PC-3 (cell line): ENCODE measurements at regions of chr5 and their contacts with region 1.

Region 1: DNA sequence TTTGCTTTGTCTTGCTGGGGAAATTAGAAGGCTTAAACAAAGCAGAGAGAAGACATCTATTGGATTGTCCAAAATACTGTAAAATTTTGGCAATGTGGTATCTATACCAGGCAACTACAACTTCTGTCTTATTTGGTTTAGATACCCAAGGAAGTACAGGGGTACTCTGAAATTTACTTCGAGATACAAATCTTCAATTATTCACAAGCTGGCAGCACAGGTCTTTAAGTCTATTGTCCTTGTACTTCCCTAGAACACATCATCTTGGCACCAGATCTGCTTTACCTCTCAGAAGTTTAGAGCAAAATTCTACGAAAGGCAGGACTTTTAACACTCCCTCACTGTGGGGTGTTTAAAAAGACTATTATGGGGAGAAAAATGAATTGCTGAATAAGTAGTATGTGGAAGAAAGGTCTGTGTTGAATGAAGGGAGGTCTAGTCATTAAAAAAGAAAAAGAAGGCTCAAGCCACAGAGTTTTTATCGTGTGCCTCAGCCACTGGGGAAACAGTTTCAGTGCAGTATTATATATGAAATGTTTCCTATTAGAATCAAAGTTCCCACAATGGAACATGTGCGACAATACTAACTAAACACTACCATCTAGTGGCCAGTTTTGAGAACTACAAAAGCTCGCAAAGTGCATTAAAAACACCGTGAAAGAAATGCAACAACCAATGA is 93.7 kb downstream of the PDE4D start:
- DNase-seq: peak; percentile 72
- ATAC-seq: peak; percentile 46
- H3K4me3 ChIP-seq: peak overlapping the region; percentile 56
- H3K27ac ChIP-seq: peak overlapping the region; percentile 99
- H3K4me1 ChIP-seq: peaks cover 28% of the 10 kb centered on the region
- H3K27me3 ChIP-seq: no peaks in the 10 kb centered on the region
- CTCF ChIP-seq: peak; percentile 74

Region 2: DNA sequence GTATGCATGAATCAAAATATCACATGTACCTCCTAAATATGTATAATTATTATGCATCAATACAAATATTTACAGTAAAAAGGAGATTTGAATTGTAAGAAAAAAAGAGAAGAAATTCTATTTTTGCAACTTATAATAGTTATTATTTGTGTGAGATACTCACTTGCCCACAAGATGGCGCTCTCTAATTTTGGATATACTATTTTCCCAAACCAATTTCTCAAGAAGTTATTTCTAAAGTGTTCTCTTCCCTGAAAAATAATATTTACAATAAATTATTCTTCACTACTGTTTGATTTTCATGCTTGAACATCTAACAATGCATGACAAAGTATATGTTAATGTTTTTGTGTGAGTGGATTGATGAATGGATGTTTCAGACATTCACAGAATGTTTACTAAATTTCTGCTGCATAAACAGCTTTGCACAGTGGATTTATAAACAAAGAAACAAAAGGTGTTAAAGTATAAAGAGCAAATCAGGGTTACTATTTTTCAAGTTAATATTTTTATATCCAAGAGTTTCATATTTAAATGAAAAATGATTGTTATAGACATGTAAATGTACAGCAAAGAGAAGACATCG is 409.6 kb before region 1 on chr5:
- CTCF ChIA-PET with region 1: no interaction called
- POLR2A ChIA-PET with region 1: no interaction called
- intact Hi-C with region 1: loop called (anchors 1 kb)
- DNase-seq: no peak
- ATAC-seq: no peak
- H3K4me3 ChIP-seq: no peak overlapping the region
- H3K27ac ChIP-seq: no peak overlapping the region
- H3K4me1 ChIP-seq: no peaks in the 10 kb centered on the region
- H3K27me3 ChIP-seq: no peaks in the 10 kb centered on the region
- CTCF ChIP-seq: peak; percentile 32; the same call in 1 of the 2 replicates

Region 3: GRCh38 chr5:59517926-59518585 is 281.8 kb before region 1 on chr5:
- CTCF ChIA-PET with region 1: no interaction called
- POLR2A ChIA-PET with region 1: no interaction called
- intact Hi-C with region 1: loop called (anchors 5 kb)
- DNase-seq: peak; percentile 78
- ATAC-seq: peak; percentile 95
- H3K4me3 ChIP-seq: peak overlapping the region; percentile 48; the same call in 1 of the 2 replicates
- H3K27ac ChIP-seq: peak overlapping the region; percentile 88
- H3K4me1 ChIP-seq: peaks cover 39% of the 10 kb centered on the region
- H3K27me3 ChIP-seq: no peaks in the 10 kb centered on the region
- CTCF ChIP-seq: no peak

Region 4: GRCh38 chr5:59673438-59674058 is 126.3 kb before region 1 on chr5:
- CTCF ChIA-PET with region 1: interaction called, 4 read pairs
- POLR2A ChIA-PET with region 1: no interaction called
- intact Hi-C with region 1: loop called (anchors 1 kb)
- DNase-seq: peak; percentile 70
- ATAC-seq: peak; percentile 54
- H3K4me3 ChIP-seq: no peak overlapping the region
- H3K27ac ChIP-seq: peak overlapping the region; percentile 38
- H3K4me1 ChIP-seq: peaks cover 22% of the 10 kb centered on the region
- H3K27me3 ChIP-seq: no peaks in the 10 kb centered on the region
- CTCF ChIP-seq: peak; percentile 76

Region 5: GRCh38 chr5:59745422-59745863 is 54.4 kb before region 1 on chr5:
- CTCF ChIA-PET with region 1: no interaction called
- POLR2A ChIA-PET with region 1: no interaction called
- intact Hi-C with region 1: loop called (anchors 1 kb)
- DNase-seq: peak; percentile 61
- ATAC-seq: peak; percentile 44
- H3K4me3 ChIP-seq: peak overlapping the region; percentile 48; the same call in 1 of the 2 replicates
- H3K27ac ChIP-seq: peak overlapping the region; percentile 99
- H3K4me1 ChIP-seq: peaks cover 37% of the 10 kb centered on the region
- H3K27me3 ChIP-seq: no peaks in the 10 kb centered on the region
- CTCF ChIP-seq: no peak